ENCODE measurements at regions of chr15 and their contacts with region 1.

Region 1: DNA sequence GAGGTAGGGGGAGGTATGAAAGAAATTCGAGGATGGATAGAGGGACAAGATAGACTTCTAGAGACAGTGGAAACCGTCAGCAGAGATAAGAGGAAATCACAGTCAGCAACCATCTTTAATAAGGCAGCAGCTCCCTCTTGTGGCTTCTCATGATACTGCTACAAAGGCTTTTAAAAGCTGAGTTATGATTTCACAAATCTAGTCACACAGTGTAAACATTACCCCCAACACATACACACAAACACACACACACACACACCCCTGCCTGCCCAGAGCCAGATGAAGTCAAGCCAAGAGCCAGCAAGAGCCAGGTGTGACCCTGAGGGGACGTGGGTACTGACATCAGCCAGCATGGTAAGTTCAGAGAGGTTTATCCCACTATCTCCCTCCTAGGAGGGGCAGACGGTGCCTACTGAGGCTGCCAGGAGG is 18.9 kb upstream of the TGM5 start:
- DNase-seq: peak in 1 of 2 donors; percentile 32
- ATAC-seq: peak; percentile 78 to 92
- H3K4me3 ChIP-seq: no peak overlapping the region
- H3K27ac ChIP-seq: no peak overlapping the region
- H3K4me1 ChIP-seq: peaks cover 2 to 7% of the 10 kb centered on the region in 2 donors
- H3K27me3 ChIP-seq: no peaks in the 10 kb centered on the region
- CTCF ChIP-seq: peak; percentile 79 to 92 (median 90)
- POLR2A ChIP-seq: no peak

Region 2: DNA sequence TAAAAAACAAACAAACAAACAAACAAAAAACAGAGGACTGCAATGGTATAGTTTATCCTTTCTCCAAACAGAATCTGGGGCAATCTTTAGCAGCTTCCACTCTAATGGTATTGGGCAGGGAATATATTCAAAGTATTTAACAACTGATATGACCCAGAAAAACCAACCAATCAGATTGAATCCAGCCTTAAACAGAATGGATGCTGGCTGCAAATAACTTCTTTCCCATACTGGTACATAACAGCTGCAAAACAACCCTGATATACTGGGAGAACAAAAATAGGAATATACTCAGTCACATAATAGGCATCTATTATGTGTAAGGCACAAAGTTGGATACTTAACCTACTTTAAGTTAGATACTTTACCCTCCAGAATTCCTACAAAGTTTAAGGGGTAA is 228.9 kb before region 1 on chr15:
- in situ Hi-C with region 1: no loop called
- intact Hi-C with region 1: no loop called
- DNase-seq: no peak
- ATAC-seq: no peak
- H3K4me3 ChIP-seq: no peak overlapping the region
- H3K27ac ChIP-seq: no peak overlapping the region
- H3K4me1 ChIP-seq: no peaks in the 10 kb centered on the region
- H3K27me3 ChIP-seq: no peaks in the 10 kb centered on the region
- CTCF ChIP-seq: no peak
- POLR2A ChIP-seq: no peak

Region 3: DNA sequence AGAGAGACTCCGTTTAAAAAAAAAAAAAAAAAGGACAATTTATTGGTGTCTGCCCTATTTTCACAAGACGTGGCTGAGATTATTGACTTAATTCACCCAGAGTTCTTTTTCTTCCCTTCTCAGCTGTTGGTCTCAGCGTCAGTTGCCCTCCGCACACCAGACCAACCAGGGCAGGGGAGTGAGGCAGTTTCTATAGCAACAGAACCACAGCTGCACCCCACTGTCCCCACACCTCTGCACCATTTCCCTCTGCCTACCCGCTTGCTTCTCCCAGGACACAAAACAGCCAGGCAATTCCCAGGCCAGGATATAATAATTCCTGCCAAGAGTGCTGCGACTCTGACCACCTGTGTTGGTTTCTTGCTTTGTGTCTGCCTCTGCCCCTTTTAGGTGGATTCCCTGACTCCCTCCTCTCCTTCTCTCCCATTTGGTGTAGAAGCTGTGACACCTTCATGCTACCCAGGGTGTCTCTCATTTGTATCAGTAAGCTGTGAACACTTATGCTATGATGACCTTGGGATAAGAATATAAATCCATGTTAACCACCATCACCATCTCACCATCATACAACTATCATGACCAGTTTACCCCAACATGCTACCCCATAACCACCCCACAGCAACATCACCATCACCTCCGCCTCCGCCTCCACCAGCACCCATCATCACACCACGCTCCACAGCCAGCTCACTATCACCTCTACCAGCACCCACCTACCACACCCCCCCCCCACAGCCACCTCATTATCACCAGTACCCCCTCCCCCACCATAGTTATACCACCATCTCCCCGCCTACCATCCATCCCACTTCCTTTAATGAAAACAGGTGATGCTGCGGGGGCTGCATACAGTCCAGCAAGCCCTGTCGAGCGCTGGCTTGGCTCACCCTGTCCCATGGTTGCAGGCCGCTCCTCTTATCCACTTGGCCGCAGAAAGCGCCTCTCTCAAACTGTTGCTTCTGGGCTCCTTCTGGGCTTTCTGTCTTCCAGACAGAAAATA is 65.4 kb before region 1 on chr15:
- in situ Hi-C with region 1: loop called (anchors 5 kb)
- intact Hi-C with region 1: loop called (anchors 1 kb)
- DNase-seq: no peak
- ATAC-seq: no peak
- H3K4me3 ChIP-seq: no peak overlapping the region
- H3K27ac ChIP-seq: no peak overlapping the region
- H3K4me1 ChIP-seq: no peaks in the 10 kb centered on the region
- H3K27me3 ChIP-seq: no peaks in the 10 kb centered on the region
- CTCF ChIP-seq: no peak
- POLR2A ChIP-seq: no peak

Region 4: DNA sequence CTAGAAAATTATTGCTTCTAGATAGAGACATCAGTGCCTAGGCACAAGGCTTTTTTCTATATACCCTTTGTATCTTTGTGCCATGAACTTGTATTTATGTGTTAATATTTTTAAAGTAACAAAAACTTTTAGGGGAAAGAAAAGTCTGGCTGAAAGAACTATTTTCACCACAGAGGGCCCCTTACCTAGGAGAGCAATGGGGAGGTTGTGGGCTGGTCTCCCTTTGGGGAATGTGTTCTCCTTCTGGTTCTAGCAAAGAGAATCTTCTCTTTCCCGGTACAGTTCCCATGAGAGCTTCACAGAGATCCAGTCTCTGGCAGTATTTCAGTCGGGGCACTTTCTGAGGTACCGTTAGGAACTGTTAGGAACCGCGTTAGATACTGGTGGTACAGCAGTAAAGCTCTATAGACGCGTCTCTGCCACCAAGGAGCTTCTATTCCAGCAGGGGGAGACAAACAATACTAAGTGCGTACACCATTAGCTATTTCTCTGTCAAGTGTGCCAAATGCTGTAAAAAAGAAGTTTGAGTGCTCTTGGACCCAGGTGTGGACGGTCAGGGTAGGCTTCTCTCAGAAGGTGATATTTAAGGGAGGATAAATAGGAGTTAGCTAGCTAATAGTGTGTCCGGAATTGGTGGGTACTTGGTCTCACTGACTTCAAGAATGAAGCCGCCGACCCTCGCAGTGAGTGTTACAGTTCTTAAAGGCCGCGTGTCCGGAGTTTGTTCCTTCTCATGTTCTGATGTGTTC is 60.2 kb before region 1 on chr15:
- in situ Hi-C with region 1: loop called (anchors 5 kb)
- intact Hi-C with region 1: loop called (anchors 1 kb)
- DNase-seq: peak; percentile 18 to 32
- ATAC-seq: peak; percentile 94 to 98
- H3K4me3 ChIP-seq: no peak overlapping the region
- H3K27ac ChIP-seq: no peak overlapping the region
- H3K4me1 ChIP-seq: peaks cover 0 to 12% of the 10 kb centered on the region in 2 donors
- H3K27me3 ChIP-seq: no peaks in the 10 kb centered on the region
- CTCF ChIP-seq: peak; percentile 78 to 88 (median 86)
- POLR2A ChIP-seq: no peak

Measured in gastrocnemius medialis (tissue), 4 donors.